Calu3 (cell line): ENCODE measurements at regions of chr6 and their contacts with region 1.

Region 1: DNA sequence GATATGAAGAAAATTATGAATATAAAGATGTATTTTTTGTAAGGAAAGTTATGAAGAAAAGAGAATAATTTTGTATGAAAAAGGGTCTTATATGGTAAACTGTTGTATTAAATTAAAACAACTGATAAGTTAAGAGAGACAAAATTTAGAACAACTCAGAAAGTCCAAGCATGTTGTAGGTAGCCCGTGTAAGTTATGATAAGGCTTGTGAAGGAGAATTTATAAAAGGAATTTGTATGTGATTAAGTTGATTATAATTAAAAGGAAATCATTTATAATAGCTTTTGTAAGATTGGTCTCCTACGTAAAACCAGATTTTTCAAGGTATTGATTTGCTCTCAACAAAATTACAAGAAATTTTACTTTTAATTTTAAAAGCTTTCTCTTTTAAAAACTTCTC is 1579.3 kb downstream of the HACE1 start:
- DNase-seq: no peak
- H3K4me3 Mint-ChIP-seq: no peak overlapping the region
- H3K27ac Mint-ChIP-seq: no peak overlapping the region
- H3K4me1 Mint-ChIP-seq: no peaks in the 10 kb centered on the region
- H3K27me3 Mint-ChIP-seq: no peaks in the 10 kb centered on the region
- CTCF ChIP-seq: no peak

Region 2: DNA sequence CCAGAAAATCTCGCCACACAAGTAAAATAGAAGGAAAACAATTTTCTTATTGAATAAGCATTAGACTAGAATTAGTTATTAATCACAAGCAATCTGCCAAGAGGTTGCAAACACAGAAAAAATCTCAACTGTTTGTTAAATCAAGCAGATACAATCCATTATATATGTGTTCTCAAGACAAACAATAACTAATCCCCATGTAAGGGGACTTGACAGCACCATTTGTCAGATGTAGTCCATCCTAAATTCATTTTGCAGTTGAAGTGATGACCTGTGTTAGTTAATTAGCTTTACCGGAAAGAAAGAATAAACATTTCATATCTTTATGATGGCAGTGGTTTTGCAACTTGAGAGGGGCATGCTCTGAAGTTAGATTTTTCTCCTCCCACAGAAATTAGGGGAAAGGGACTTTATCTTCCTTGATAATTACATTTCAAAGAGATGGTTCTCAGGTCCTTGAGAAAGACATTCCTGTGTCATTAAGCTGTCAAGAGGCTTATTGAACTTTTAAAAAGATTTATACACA is 298.9 kb before region 1 on chr6:
- CTCF ChIA-PET with region 1: no interaction called
- intact Hi-C with region 1: no loop called
- DNase-seq: no peak
- H3K4me3 Mint-ChIP-seq: no peak overlapping the region
- H3K27ac Mint-ChIP-seq: no peak overlapping the region
- H3K4me1 Mint-ChIP-seq: no peaks in the 10 kb centered on the region
- H3K27me3 Mint-ChIP-seq: no peaks in the 10 kb centered on the region
- CTCF ChIP-seq: no peak

Region 3: GRCh38 chr6:103326760-103327757 is 46.6 kb after region 1 on chr6:
- CTCF ChIA-PET with region 1: no interaction called
- intact Hi-C with region 1: loop called (anchors 5 kb)
- DNase-seq: no peak
- H3K4me3 Mint-ChIP-seq: no peak overlapping the region
- H3K27ac Mint-ChIP-seq: no peak overlapping the region
- H3K4me1 Mint-ChIP-seq: no peaks in the 10 kb centered on the region
- H3K27me3 Mint-ChIP-seq: no peaks in the 10 kb centered on the region
- CTCF ChIP-seq: no peak